ENCODE measurements at regions of chr11 and their contacts with region 1.

Region 1: GRCh38 chr11:848380-848931 is 5.8 kb downstream of the TSPAN4 start:
- DNase-seq: peak; percentile 32 to 77 (median 62)
- ATAC-seq: peak; percentile 75
- H3K4me3 ChIP-seq: no peak overlapping the region
- H3K4me3 Mint-ChIP-seq: peak overlapping the region; percentile 14 to 83 (median 54)
- H3K27ac ChIP-seq: no peak overlapping the region
- H3K27ac Mint-ChIP-seq: peak overlapping the region in 2 of 9 donors; percentile 25 to 62
- H3K4me1 ChIP-seq: peaks cover 7 to 15% of the 10 kb centered on the region in 2 donors
- H3K4me1 Mint-ChIP-seq: peaks cover 4 to 15% (median 10%) of the 10 kb centered on the region in 7 donors
- H3K27me3 ChIP-seq: peaks cover 0 to 6% of the 10 kb centered on the region in 2 donors
- H3K27me3 Mint-ChIP-seq: peaks cover 0 to 12% (median 0%) of the 10 kb centered on the region in 5 donors

Region 2: DNA sequence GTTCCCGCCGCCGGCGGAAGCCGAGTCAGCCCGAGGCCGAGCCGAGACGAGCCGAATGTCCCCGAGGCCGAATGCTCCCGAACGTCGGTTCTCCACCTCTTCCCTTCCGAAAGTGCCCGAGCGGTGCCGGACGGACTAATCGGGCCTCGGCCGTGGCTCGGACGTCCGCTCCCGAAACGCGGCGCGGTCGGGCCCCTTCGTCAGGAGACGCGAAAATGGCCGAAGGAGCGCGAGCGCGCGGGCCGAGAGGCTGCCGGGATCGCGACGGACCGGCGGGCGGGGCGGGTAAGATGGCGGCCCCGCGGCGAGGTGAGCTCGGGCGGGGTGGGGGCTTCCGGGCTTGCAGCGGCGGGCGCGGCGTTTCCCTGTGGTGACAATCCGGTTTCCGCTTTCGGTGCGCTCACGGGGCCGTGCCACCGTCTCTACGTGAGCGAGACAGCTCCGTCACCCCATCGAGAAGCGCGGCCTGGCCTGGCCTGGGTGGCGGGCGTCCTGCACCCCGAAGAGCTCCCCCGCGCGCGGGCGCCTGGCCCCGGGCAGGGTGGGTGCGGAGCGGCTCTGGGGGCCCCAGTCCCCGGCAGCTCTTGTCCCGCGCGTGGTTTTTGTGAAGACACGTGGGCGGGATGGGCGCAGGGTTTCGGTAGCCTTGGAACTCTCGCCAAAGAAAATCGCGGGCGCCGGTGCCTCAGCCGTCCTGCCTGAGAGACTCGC is 152.8 kb before region 1 on chr11 and contains the start of gene TMEM80:
- CTCF ChIA-PET with region 1: no interaction called
- POLR2A ChIA-PET with region 1: no interaction called
- intact Hi-C with region 1: no loop called
- DNase-seq: peak; percentile 91 to 98 (median 98)
- ATAC-seq: peak; percentile 76
- H3K4me3 ChIP-seq: peak within 1 kb of the TSS; percentile 97
- H3K4me3 Mint-ChIP-seq: peak within 1 kb of the TSS; percentile 84 to 92 (median 89)
- H3K27ac ChIP-seq: peak within 1 kb of the TSS; percentile 100
- H3K27ac Mint-ChIP-seq: peak within 1 kb of the TSS; percentile 88 to 98 (median 95)
- H3K4me1 ChIP-seq: peaks cover 13 to 42% of the 10 kb centered on the region in 2 donors
- H3K4me1 Mint-ChIP-seq: peaks cover 40 to 56% (median 52%) of the 10 kb centered on the region in 7 donors
- H3K27me3 ChIP-seq: no peaks in the 10 kb centered on the region
- H3K27me3 Mint-ChIP-seq: no peaks in the 10 kb centered on the region
- total RNA-seq, gene TMEM80: 26.2 to 44.3 (median 40.4) TPM

Region 3: GRCh38 chr11:910589-911195 is 62.2 kb after region 1 on chr11 and contains the start of gene CHID1:
- CTCF ChIA-PET with region 1: interaction called, 3 read pairs
- POLR2A ChIA-PET with region 1: interaction called, 5 read pairs
- intact Hi-C with region 1: loop called (anchors 2 to 5 kb)
- DNase-seq: peak; percentile 60 to 94 (median 73)
- ATAC-seq: peak; percentile 98
- H3K4me3 ChIP-seq: peak within 1 kb of the TSS; percentile 68
- H3K4me3 Mint-ChIP-seq: peak within 1 kb of the TSS; percentile 82 to 99 (median 90)
- H3K27ac ChIP-seq: peak within 1 kb of the TSS; percentile 79
- H3K27ac Mint-ChIP-seq: peak within 1 kb of the TSS; percentile 73 to 97 (median 86)
- H3K4me1 ChIP-seq: peaks cover 4 to 10% of the 10 kb centered on the region in 2 donors
- H3K4me1 Mint-ChIP-seq: peaks cover 15 to 24% (median 20%) of the 10 kb centered on the region in 7 donors
- H3K27me3 ChIP-seq: no peaks in the 10 kb centered on the region
- H3K27me3 Mint-ChIP-seq: no peaks in the 10 kb centered on the region
- total RNA-seq, gene CHID1: 30.8 to 56.3 (median 53.0) TPM

Region 4: GRCh38 chr11:970319-970871 is 121.9 kb after region 1 on chr11:
- CTCF ChIA-PET with region 1: no interaction called
- POLR2A ChIA-PET with region 1: no interaction called
- intact Hi-C with region 1: loop called in 1 of 2 experiments (anchors 5 kb)
- DNase-seq: peak in 6 of 9 donors; percentile 7 to 34 (median 19)
- ATAC-seq: peak; percentile 62
- H3K4me3 ChIP-seq: no peak overlapping the region
- H3K4me3 Mint-ChIP-seq: peak overlapping the region in 9 of 10 donors; percentile 18 to 76 (median 62)
- H3K27ac ChIP-seq: peak overlapping the region; percentile 27
- H3K27ac Mint-ChIP-seq: peak overlapping the region; percentile 15 to 95 (median 81)
- H3K4me1 ChIP-seq: peaks cover 12 to 14% of the 10 kb centered on the region in 2 donors
- H3K4me1 Mint-ChIP-seq: peaks cover 19 to 52% (median 37%) of the 10 kb centered on the region in 7 donors
- H3K27me3 ChIP-seq: no peaks in the 10 kb centered on the region
- H3K27me3 Mint-ChIP-seq: no peaks in the 10 kb centered on the region

Region 5: GRCh38 chr11:1050581-1051355 is 202.3 kb after region 1 on chr11:
- CTCF ChIA-PET with region 1: interaction called, 19 read pairs
- POLR2A ChIA-PET with region 1: interaction called, 3 read pairs
- intact Hi-C with region 1: loop called in 1 of 2 experiments (anchors 1 kb)
- DNase-seq: peak; percentile 54 to 78 (median 68)
- ATAC-seq: peak; percentile 95
- H3K4me3 ChIP-seq: no peak overlapping the region
- H3K4me3 Mint-ChIP-seq: no peak overlapping the region
- H3K27ac ChIP-seq: no peak overlapping the region
- H3K27ac Mint-ChIP-seq: no peak overlapping the region
- H3K4me1 ChIP-seq: no peaks in the 10 kb centered on the region
- H3K4me1 Mint-ChIP-seq: peaks cover 0 to 5% (median 0%) of the 10 kb centered on the region in 7 donors
- H3K27me3 ChIP-seq: peaks cover 0 to 5% of the 10 kb centered on the region in 2 donors
- H3K27me3 Mint-ChIP-seq: peaks cover 0 to 11% (median 4%) of the 10 kb centered on the region in 5 donors